CD4-positive, alpha-beta T cell (primary cell): ENCODE measurements at regions of chr1 and their contacts with region 1.

Region 1: GRCh38 chr1:51729156-51729823 is 112.4 kb downstream of the OSBPL9 start:
- DNase-seq: peak; percentile 84 to 97 (median 90)
- ATAC-seq: peak; percentile 90
- H3K4me3 ChIP-seq: peak overlapping the region; percentile 92
- H3K4me3 Mint-ChIP-seq: peak overlapping the region; percentile 95
- H3K27ac ChIP-seq: peak overlapping the region; percentile 71
- H3K27ac Mint-ChIP-seq: peak overlapping the region; percentile 87
- H3K4me1 ChIP-seq: peaks cover 22% of the 10 kb centered on the region
- H3K4me1 Mint-ChIP-seq: peaks cover 58% of the 10 kb centered on the region
- H3K27me3 ChIP-seq: no peaks in the 10 kb centered on the region
- H3K27me3 Mint-ChIP-seq: no peaks in the 10 kb centered on the region
- CTCF ChIP-seq: no peak

Region 2: GRCh38 chr1:50808296-50808695 is 921.0 kb before region 1 on chr1:
- CTCF ChIA-PET with region 1: no interaction called
- POLR2A ChIA-PET with region 1: no interaction called
- intact Hi-C with region 1: no loop called
- DNase-seq: no peak
- ATAC-seq: no peak
- H3K4me3 ChIP-seq: no peak overlapping the region
- H3K4me3 Mint-ChIP-seq: no peak overlapping the region
- H3K27ac ChIP-seq: no peak overlapping the region
- H3K27ac Mint-ChIP-seq: no peak overlapping the region
- H3K4me1 ChIP-seq: no peaks in the 10 kb centered on the region
- H3K4me1 Mint-ChIP-seq: peaks cover 71% of the 10 kb centered on the region
- H3K27me3 ChIP-seq: no peaks in the 10 kb centered on the region
- H3K27me3 Mint-ChIP-seq: no peaks in the 10 kb centered on the region
- CTCF ChIP-seq: no peak

Region 3: GRCh38 chr1:51616901-51617708 is 112.2 kb before region 1 on chr1 and contains the start of gene OSBPL9:
- CTCF ChIA-PET with region 1: no interaction called
- POLR2A ChIA-PET with region 1: interaction called, 6 read pairs
- intact Hi-C with region 1: loop called in 1 of 2 experiments (anchors 2 kb)
- DNase-seq: peak; percentile 80 to 98 (median 85)
- ATAC-seq: peak; percentile 90
- H3K4me3 ChIP-seq: peak within 1 kb of the TSS; percentile 97
- H3K4me3 Mint-ChIP-seq: peak within 1 kb of the TSS; percentile 99
- H3K27ac ChIP-seq: peak within 1 kb of the TSS; percentile 61 to 73
- H3K27ac Mint-ChIP-seq: peak within 1 kb of the TSS; percentile 95
- H3K4me1 ChIP-seq: peaks cover 17% of the 10 kb centered on the region
- H3K4me1 Mint-ChIP-seq: peaks cover 47% of the 10 kb centered on the region
- H3K27me3 ChIP-seq: no peaks in the 10 kb centered on the region
- H3K27me3 Mint-ChIP-seq: no peaks in the 10 kb centered on the region
- CTCF ChIP-seq: no peak
- total RNA-seq, gene OSBPL9: 35.6 to 36.5 TPM

Region 4: GRCh38 chr1:52404116-52404986 is 675.1 kb after region 1 on chr1 and contains the starts of genes ORC1 and PRPF38A:
- CTCF ChIA-PET with region 1: no interaction called
- POLR2A ChIA-PET with region 1: no interaction called
- intact Hi-C with region 1: no loop called
- DNase-seq: peak; percentile 94 to 100 (median 97)
- ATAC-seq: peak; percentile 89
- H3K4me3 ChIP-seq: peak within 1 kb of the TSS; percentile 62
- H3K4me3 Mint-ChIP-seq: peak within 1 kb of the TSS; percentile 98
- H3K27ac ChIP-seq: peak within 1 kb of the TSS; percentile 88 to 89
- H3K27ac Mint-ChIP-seq: peak within 1 kb of the TSS; percentile 99
- H3K4me1 ChIP-seq: peaks cover 13% of the 10 kb centered on the region
- H3K4me1 Mint-ChIP-seq: peaks cover 48% of the 10 kb centered on the region
- H3K27me3 ChIP-seq: no peaks in the 10 kb centered on the region
- H3K27me3 Mint-ChIP-seq: no peaks in the 10 kb centered on the region
- CTCF ChIP-seq: peak; percentile 34
- total RNA-seq, gene ORC1: 1.1 to 1.3 TPM
- total RNA-seq, gene PRPF38A: 56.2 to 63.6 TPM